CD4-positive, alpha-beta T cell (primary cell): ENCODE measurements at regions of chr6 and their contacts with region 1.

Region 1: DNA sequence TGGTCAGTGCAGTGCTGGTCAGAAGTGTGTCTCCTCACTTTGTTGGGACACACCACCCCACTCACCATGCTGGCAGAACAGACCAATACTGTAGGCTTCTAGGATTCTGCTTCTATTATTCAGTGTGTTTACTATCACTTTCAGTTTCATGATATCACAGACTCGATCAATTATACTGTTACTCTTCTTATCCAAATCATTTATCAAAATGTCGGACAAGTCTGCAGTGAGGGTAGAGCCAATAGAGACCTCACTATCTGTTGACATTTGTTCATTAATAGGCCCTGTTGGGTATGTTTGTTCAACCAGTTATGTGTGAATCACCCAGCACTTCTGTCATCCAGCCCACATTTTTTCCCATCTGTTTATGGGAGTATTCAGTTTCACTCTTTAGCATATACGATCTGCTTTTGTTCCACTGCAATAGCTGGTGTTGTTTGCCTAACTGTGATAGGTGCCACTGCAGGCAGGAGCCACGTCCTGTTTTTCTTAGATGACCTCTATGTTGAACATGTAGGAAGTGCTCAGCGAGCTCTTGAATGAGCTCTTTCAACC is 140.1 kb downstream of the NRN1 start:
- DNase-seq: peak in 7 of 14 experiments; percentile 7 to 65 (median 31)
- ATAC-seq: peak; percentile 69
- H3K4me3 ChIP-seq: peak overlapping the region; percentile 47
- H3K4me3 Mint-ChIP-seq: peak overlapping the region; percentile 83
- H3K27ac ChIP-seq: peak overlapping the region; percentile 54 to 86
- H3K27ac Mint-ChIP-seq: peak overlapping the region; percentile 92
- H3K4me1 ChIP-seq: peaks cover 29% of the 10 kb centered on the region
- H3K4me1 Mint-ChIP-seq: peaks cover 57% of the 10 kb centered on the region
- H3K27me3 ChIP-seq: no peaks in the 10 kb centered on the region
- H3K27me3 Mint-ChIP-seq: no peaks in the 10 kb centered on the region
- CTCF ChIP-seq: no peak

Region 2: GRCh38 chr6:5813625-5814027 is 53.0 kb before region 1 on chr6:
- CTCF ChIA-PET with region 1: no interaction called
- POLR2A ChIA-PET with region 1: no interaction called
- intact Hi-C with region 1: no loop called
- DNase-seq: peak in 2 of 14 experiments; percentile 16 to 55
- ATAC-seq: no peak
- H3K4me3 ChIP-seq: peak overlapping the region; percentile 11
- H3K4me3 Mint-ChIP-seq: peak overlapping the region; percentile 13
- H3K27ac ChIP-seq: peak overlapping the region in 1 of 2 donors; percentile 16
- H3K27ac Mint-ChIP-seq: peak overlapping the region; percentile 55
- H3K4me1 ChIP-seq: peaks cover 20% of the 10 kb centered on the region
- H3K4me1 Mint-ChIP-seq: peaks cover 27% of the 10 kb centered on the region
- H3K27me3 ChIP-seq: no peaks in the 10 kb centered on the region
- H3K27me3 Mint-ChIP-seq: no peaks in the 10 kb centered on the region
- CTCF ChIP-seq: no peak

Region 3: DNA sequence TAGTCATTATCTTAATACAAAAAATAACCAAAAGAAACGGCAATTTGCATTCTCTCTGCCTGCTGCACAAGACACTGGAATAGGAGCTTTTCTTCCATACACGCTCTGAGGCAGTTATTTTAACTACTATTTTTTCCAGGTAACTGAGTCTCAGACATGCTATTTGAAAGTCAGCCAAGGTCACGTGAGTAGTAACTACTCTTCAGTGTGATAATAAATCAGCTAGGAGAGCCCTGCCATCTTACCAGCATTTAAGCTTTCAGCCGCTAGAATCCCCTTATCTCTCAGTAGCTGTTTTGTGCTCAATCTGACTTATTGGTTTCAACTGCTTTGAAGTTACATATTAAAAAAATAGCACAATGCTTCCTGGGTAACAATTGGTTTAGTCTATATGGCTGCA is 55.6 kb after region 1 on chr6:
- CTCF ChIA-PET with region 1: no interaction called
- POLR2A ChIA-PET with region 1: no interaction called
- intact Hi-C with region 1: no loop called
- DNase-seq: no peak
- ATAC-seq: no peak
- H3K4me3 ChIP-seq: no peak overlapping the region
- H3K4me3 Mint-ChIP-seq: no peak overlapping the region
- H3K27ac ChIP-seq: no peak overlapping the region
- H3K27ac Mint-ChIP-seq: no peak overlapping the region
- H3K4me1 ChIP-seq: no peaks in the 10 kb centered on the region
- H3K4me1 Mint-ChIP-seq: no peaks in the 10 kb centered on the region
- H3K27me3 ChIP-seq: peaks cover 0 to 4% of the 10 kb centered on the region in 2 experiments
- H3K27me3 Mint-ChIP-seq: peaks cover 4% of the 10 kb centered on the region
- CTCF ChIP-seq: no peak

Region 4: GRCh38 chr6:5995949-5996713 is 129.5 kb after region 1 on chr6:
- CTCF ChIA-PET with region 1: no interaction called
- POLR2A ChIA-PET with region 1: no interaction called
- intact Hi-C with region 1: loop called in 1 of 2 experiments (anchors 5 kb)
- DNase-seq: peak in 2 of 14 experiments; percentile 30 to 32
- ATAC-seq: no peak
- H3K4me3 ChIP-seq: peak overlapping the region; percentile 56
- H3K4me3 Mint-ChIP-seq: peak overlapping the region; percentile 96
- H3K27ac ChIP-seq: no peak overlapping the region
- H3K27ac Mint-ChIP-seq: no peak overlapping the region
- H3K4me1 ChIP-seq: peaks cover 59% of the 10 kb centered on the region
- H3K4me1 Mint-ChIP-seq: peaks cover 72% of the 10 kb centered on the region
- H3K27me3 ChIP-seq: peaks cover 85 to 94% of the 10 kb centered on the region in 2 experiments
- H3K27me3 Mint-ChIP-seq: peaks cover 98% of the 10 kb centered on the region
- CTCF ChIP-seq: no peak